ENCODE measurements at regions of chr12 and their contacts with region 1.

Region 1: GRCh38 chr12:126019385-126019784 is 954.1 kb downstream of the AACS start:
- DNase-seq: no peak
- H3K4me3 ChIP-seq: no peak overlapping the region
- CTCF ChIP-seq: no peak

Region 2: DNA sequence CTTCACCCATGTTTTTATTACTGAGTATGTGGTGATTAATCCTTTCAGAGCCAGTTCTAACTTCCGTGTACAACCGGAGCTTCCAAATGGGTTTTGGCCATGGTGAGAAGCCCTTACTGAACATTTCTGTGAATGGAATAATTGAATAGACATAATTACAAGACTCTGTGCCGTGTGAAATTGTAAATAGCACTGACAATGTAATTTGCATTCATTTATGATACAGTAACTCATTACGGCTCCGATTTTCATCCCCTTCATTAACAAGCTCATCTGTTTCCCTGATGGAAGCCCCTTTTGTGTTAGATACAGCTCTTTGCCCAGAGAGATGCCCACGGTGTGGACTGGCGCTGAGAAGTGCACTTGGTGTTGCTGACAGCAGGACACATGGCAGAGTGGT is 63.2 kb before region 1 on chr12:
- in situ Hi-C with region 1: loop called (anchors 5 kb)
- DNase-seq: no peak
- H3K4me3 ChIP-seq: no peak overlapping the region
- CTCF ChIP-seq: no peak

Region 3: GRCh38 chr12:126067626-126068329 is 48.4 kb after region 1 on chr12:
- in situ Hi-C with region 1: no loop called
- DNase-seq: no peak
- H3K4me3 ChIP-seq: no peak overlapping the region
- CTCF ChIP-seq: no peak